Ovary (tissue), 10 donors: ENCODE measurements at regions of chr18 and their contacts with region 1.

Region 1: DNA sequence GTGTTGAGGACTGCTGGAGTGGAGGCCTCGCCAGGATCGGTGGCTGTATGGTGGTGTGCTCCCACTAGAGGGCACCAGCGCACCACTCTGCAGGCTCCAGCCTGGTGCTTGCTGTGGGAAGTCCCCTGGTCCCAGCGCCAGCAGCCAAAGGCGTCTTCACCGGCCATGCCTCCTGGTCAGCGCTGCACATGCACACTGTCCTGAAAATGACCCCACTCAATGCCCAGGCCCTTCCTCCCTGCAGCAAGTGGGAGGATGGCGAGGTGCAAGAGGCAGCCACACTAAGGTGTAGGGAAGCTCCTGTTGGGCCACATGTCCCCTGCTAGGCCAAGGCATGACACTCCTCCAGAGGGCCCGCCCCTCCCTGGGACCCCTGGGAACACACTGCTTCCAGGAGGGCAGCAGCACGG is 136.5 kb downstream of the CTIF start:
- DNase-seq: peak; percentile 77 to 90 (median 88)
- H3K4me3 ChIP-seq: no peak overlapping the region
- H3K27ac ChIP-seq: no peak overlapping the region
- H3K4me1 ChIP-seq: peaks cover 6% of the 10 kb centered on the region
- H3K27me3 ChIP-seq: no peaks in the 10 kb centered on the region
- CTCF ChIP-seq: peak; percentile 77 to 86 (median 83)
- EP300 ChIP-seq: no peak
- POLR2A ChIP-seq: no peak

Region 2: DNA sequence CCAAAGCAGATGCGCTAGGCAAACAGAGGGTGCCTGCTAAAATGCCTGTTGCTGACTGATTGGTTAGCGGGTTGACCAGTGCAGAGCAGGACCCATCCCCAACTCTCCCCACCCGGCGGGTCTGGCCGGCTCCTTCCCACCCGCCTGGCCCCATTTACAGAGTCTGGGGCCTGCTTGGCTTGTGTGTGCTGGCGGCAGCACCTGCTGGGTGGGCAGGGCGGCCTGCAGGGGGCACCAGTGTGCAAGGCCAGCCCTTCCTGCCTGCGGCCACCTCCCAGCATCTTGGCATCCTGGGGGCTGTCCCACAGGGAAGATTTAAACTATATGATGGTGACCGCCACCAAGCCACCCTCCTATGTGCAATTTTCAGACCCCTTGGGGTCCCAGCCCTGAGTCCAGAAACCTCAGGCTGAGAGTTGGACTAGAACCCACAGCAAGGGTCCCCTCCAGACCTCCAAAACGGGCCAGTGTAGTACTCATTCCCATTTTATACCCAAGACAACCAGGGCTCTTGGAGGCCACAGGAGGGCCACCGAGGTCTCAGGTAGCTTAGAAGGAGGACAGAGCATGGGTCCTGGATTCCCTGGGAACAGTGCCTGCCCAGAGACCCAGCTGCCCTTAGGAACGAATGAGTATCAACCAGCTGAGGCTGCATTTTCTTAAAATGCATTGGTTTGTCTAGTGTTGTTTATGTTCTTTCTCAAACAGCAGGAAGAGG is 101.8 kb after region 1 on chr18:
- intact Hi-C with region 1: loop called in 2 of 4 experiments (anchors 2 to 10 kb)
- DNase-seq: peak; percentile 58 to 77 (median 73)
- H3K4me3 ChIP-seq: no peak overlapping the region
- H3K27ac ChIP-seq: peak overlapping the region in 1 of 2 donors; percentile 55
- H3K4me1 ChIP-seq: peaks cover 26% of the 10 kb centered on the region
- H3K27me3 ChIP-seq: no peaks in the 10 kb centered on the region
- CTCF ChIP-seq: peak; percentile 71 to 82 (median 72)
- EP300 ChIP-seq: no peak
- POLR2A ChIP-seq: no peak

Region 3: DNA sequence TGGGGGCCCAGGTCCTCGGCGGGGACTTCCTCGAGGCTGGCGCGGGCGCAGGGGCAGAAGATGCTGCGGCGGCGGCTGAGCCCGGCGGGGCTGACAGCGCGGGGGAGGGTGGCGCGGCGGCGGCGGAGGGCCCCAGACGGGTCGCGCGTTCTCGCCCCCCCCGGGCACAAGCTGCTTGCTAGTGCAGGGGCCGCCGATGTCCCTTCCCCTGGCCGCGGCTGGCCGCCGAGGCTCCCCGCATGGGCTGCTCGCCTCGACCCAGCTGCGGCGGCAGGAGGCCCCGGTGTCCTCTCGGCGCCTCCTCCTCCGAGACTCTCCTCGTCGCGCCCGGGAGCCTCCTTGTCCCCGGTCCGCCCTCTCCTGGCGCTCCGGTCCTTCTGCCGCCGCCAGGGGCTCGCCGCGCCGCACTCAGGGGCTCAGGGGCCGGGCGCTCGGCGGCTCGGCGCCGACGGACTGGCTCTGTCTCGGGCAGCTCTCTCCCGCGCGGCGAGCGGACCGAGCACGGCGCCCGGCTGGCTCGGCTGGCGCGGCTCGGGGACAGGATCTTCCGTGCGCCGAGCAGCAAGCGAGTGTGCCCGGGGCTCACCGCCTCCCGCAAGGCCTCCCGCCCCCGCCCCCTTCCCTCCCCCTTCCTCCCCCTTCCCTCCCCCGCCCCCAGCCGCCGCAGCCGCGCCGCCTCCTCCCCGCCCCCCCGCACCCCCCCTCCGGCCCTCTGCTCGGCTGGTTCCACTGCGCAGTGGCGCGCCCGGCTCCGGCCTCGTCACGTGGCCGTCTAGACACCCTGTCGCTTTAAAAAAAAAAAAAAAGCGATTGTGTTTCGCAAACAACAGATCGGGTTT is 276.3 kb after region 1 on chr18:
- intact Hi-C with region 1: loop called in 2 of 4 experiments (anchors 10 kb)
- DNase-seq: peak; percentile 82 to 91 (median 89)
- H3K4me3 ChIP-seq: peak overlapping the region; percentile 77
- H3K27ac ChIP-seq: peak overlapping the region; percentile 91 to 96
- H3K4me1 ChIP-seq: peaks cover 11% of the 10 kb centered on the region
- H3K27me3 ChIP-seq: no peaks in the 10 kb centered on the region
- CTCF ChIP-seq: peak in 2 of 3 donors; percentile 50 to 73
- EP300 ChIP-seq: no peak
- POLR2A ChIP-seq: peak; percentile 59

Region 4: DNA sequence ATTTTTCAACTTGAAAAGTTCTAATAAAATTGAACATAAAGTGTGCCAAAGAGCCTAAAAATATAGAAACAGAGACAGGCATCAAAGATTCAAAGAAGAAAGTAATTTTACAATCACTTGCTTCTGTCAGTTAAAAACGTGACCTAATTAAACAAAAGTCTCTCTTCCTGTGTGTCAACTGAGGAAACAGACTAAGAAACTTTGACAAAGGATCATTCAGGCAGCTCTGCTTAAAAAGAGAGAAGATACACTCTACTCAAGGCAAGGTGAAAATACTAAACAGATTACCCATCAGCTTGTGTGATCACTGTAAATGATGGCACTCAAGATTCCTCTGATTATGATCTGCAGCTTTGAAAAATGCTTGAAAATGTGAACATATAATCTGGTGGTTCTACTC is 737.3 kb after region 1 on chr18:
- intact Hi-C with region 1: loop called in 3 of 4 experiments (anchors 5 to 10 kb)
- DNase-seq: no peak
- H3K4me3 ChIP-seq: no peak overlapping the region
- H3K27ac ChIP-seq: no peak overlapping the region
- H3K4me1 ChIP-seq: no peaks in the 10 kb centered on the region
- H3K27me3 ChIP-seq: no peaks in the 10 kb centered on the region
- CTCF ChIP-seq: no peak
- EP300 ChIP-seq: no peak
- POLR2A ChIP-seq: no peak

Region 5: DNA sequence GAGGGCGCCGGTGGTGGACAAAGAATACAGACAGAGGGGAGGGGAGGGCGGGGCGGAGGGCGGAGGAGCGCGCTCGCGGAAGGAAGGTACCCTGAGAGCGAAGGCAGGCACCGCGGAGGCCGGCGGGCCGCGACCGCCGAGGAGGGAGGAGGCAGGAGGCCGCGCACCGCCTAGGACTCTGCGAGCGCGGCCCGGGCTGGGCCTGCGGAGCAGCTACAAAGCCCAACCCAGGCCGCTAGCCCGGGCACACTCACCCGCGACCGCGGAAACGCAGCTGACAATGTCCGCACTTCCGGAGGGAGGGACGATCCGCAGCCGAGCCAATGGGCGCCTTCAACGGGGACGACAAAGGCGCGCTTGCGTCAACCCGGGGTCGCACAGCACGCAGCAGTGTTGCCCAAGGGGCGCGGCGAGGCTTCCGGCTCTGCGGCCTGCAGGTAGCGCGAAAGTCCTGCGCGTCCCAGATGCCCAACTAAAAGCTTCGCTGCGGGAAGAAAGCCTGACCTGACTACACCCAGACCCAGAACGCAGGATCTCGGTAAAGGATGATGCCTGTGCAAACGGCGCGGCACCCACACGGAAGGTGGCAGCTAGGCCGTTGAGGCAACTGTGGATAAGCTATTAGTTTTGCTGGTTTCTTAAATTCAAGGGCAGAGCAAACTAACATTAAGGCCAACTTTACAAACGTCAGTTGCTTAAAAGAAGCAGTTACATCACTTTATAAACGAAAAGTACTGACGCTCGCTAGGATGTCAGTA is 811.8 kb after region 1 on chr18 and contains the start of gene C18orf32:
- intact Hi-C with region 1: loop called in 2 of 4 experiments (anchors 10 kb)
- DNase-seq: peak; percentile 93 to 97 (median 95)
- H3K4me3 ChIP-seq: peak within 1 kb of the TSS; percentile 94
- H3K27ac ChIP-seq: peak within 1 kb of the TSS; percentile 51 to 94
- H3K4me1 ChIP-seq: peaks cover 6% of the 10 kb centered on the region
- H3K27me3 ChIP-seq: no peaks in the 10 kb centered on the region
- CTCF ChIP-seq: no peak
- EP300 ChIP-seq: no peak
- POLR2A ChIP-seq: peak; percentile 93
- total RNA-seq, gene C18orf32: 35.4 to 51.4 (median 44.9) TPM